Activated CD4-positive, alpha-beta T cell treated with anti-CD3 and anti-CD28 coated beads, Interleukin-2, amount 10 ng/mL, durations not matched to agents 24 days and 14 days (primary cell): ENCODE measurements at regions of chr9 and their contacts with region 1.

Region 1: GRCh38 chr9:76302947-76303940 is 91.0 kb downstream of the RFK start:
- DNase-seq: peak; percentile 64
- H3K4me3 Mint-ChIP-seq: no peak overlapping the region
- H3K27ac Mint-ChIP-seq: no peak overlapping the region
- H3K4me1 Mint-ChIP-seq: no peaks in the 10 kb centered on the region
- H3K27me3 Mint-ChIP-seq: peaks cover 7% of the 10 kb centered on the region

Region 2: DNA sequence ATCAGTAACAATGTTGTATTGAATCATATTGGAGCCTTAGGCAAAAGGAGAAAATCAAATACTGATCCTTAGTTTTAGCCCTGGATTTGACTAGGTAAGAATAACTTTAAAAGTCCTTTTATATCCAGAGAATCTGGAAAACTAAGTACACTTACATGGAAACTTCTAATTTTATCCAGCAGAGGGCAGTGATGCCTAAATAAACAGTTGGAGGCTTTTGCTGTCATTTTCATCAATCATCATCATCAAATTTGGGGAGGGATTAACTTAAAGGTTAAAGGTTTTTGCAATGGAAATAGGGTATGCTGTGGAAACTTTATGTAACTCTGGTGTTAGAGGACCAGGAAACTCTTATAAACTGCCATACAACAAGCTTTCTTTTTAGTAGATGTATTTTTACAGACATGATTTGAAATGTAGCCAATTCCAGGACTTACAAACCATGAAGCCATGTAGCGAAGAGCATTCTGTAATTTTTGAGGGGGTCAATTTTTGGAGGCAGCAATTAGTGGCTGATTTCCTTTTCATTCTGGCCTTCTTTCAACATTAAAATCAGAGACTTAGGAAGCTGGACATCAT is 1102.3 kb before region 1 on chr9:
- intact Hi-C with region 1: loop called (anchors 5 kb)
- DNase-seq: peak; percentile 74
- H3K4me3 Mint-ChIP-seq: no peak overlapping the region
- H3K27ac Mint-ChIP-seq: no peak overlapping the region
- H3K4me1 Mint-ChIP-seq: peaks cover 2% of the 10 kb centered on the region
- H3K27me3 Mint-ChIP-seq: peaks cover 2% of the 10 kb centered on the region

Region 3: GRCh38 chr9:75265525-75265972 is 1037.7 kb before region 1 on chr9:
- intact Hi-C with region 1: loop called (anchors 2 kb)
- DNase-seq: peak; percentile 83
- H3K4me3 Mint-ChIP-seq: no peak overlapping the region
- H3K27ac Mint-ChIP-seq: no peak overlapping the region
- H3K4me1 Mint-ChIP-seq: peaks cover 2% of the 10 kb centered on the region
- H3K27me3 Mint-ChIP-seq: no peaks in the 10 kb centered on the region

Region 4: GRCh38 chr9:76716085-76716672 is 412.9 kb after region 1 on chr9:
- intact Hi-C with region 1: no loop called
- DNase-seq: no peak
- H3K4me3 Mint-ChIP-seq: no peak overlapping the region
- H3K27ac Mint-ChIP-seq: no peak overlapping the region
- H3K4me1 Mint-ChIP-seq: no peaks in the 10 kb centered on the region
- H3K27me3 Mint-ChIP-seq: peaks cover 17% of the 10 kb centered on the region